ENCODE measurements at regions of chr2 and their contacts with region 1.

Region 1: DNA sequence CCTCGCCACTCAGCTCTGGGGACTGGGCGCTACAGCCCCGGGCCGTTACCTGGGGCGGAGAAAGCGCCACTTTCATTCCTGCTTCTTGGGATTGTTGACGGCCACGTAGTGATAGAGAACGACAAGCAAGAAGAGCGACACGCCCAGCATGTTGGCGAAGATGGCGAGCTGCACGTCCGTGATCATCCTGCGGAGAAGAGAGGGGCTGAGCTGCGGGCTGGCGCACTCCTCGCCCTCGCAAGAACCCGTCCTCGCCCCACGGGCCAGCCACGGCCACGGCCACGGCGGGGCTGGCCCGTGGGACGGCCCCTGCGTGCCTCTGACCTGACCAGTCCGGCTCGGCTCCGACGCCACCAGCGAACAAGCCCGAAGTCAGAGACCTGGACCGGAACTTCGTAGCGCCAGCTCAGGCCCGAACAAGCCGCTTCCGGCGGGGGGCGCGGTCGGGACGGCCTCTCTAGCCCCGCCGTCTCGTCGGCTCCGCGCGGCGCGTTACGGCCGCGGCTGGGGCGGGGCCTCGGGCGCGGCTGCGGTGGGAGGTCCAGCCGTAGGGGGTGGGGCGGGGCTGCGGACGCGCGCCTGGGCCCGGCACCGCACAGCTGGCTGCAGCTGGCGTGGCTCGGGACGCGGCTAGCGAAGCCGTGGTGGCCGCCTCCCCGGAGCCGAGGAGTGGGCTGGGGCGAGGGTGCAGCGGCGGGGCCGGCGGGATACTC is at the start of gene OST4:
- DNase-seq: peak; percentile 96
- H3K4me3 ChIP-seq: peak within 1 kb of the TSS; percentile 99
- H3K27ac ChIP-seq: peak within 1 kb of the TSS; percentile 87
- H3K4me1 ChIP-seq: peaks cover 41% of the 10 kb centered on the region
- H3K27me3 ChIP-seq: no peaks in the 10 kb centered on the region
- CTCF ChIP-seq: 0 out of 2 replicates have a peak, but pooled peaks have one; percentile 11
- total RNA-seq, gene OST4: 235 and 237 TPM in 2 replicates

Region 2: DNA sequence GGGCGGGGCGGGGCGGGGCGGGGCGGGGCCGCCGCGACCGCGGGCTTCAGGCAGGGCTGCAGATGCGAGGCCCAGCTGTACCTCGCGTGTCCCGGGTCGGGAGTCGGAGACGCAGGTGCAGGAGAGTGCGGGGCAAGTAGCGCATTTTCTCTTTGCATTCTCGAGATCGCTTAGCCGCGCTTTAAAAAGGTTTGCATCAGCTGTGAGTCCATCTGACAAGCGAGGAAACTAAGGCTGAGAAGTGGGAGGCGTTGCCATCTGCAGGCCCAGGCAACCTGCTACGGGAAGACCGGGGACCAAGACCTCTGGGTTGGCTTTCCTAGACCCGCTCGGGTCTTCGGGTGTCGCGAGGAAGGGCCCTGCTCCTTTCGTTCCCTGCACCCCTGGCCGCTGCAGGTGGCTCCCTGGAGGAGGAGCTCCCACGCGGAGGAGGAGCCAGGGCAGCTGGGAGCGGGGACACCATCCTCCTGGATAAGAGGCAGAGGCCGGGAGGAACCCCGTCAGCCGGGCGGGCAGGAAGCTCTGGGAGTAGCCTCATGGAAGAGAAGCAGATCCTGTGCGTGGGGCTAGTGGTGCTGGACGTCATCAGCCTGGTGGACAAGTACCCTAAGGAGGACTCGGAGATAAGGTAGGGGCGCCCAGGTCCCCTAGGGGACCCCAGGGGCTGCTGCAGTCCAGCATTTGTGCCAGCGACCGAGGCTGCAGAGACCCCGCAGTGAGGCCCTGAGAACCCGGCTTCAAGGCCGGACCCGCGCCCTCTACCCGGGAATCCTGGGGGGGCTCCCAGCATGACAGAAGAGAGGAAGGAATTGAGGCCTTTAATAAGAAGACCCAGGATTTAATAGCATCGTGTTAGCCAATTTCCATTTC is 15.5 kb after region 1 on chr2 and contains the start of gene KHK:
- CTCF ChIA-PET with region 1: interaction called, 10 read pairs
- POLR2A ChIA-PET with region 1: interaction called, 15 read pairs
- intact Hi-C with region 1: no loop called
- DNase-seq: peak; percentile 73
- H3K4me3 ChIP-seq: peak within 1 kb of the TSS; percentile 59
- H3K27ac ChIP-seq: peak within 1 kb of the TSS; percentile 86
- H3K4me1 ChIP-seq: peaks cover 6% of the 10 kb centered on the region
- H3K27me3 ChIP-seq: no peaks in the 10 kb centered on the region
- CTCF ChIP-seq: no peak
- total RNA-seq, gene KHK: 39.1 and 40.2 TPM in 2 replicates

Region 3: DNA sequence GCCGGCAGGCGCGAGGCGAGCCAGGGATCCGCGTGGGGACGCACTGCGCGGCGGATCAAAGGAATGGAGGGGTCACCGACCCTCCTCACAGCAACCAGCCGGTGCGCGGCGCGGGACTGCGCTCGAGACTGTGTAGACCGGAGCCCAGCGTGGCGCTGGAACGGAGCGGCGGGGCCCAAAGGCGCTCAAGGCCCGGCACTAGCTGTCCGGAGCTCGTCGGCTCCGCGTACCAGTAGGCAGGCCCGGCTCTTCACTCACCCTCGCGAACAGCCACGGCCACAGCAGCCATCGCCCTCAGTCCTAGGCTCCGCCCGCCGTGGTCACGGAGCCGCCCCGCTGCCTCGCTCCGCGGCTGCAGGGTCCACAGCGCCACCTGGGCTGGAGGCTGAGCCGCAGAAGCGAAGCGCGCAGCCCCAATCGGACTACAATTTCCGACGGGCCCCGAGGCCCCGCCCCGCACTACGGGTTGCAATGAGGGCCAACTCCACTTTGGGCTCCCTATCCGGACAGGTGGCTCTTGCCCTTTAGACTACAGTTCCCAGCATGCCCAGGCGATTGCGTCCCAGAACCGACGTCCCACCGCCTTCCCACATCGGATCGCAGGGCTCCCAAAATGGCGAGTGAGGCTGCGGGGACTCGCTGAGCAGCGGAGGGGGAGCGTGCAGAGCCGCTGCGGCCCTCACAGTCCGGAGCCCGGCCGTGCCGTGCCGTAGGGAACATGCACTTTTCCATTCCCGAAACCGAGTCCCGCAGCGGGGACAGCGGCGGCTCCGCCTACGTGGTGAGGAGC is 298.8 kb after region 1 on chr2 and contains the starts of genes EIF2B4 and SNX17:
- CTCF ChIA-PET with region 1: no interaction called
- POLR2A ChIA-PET with region 1: no interaction called
- intact Hi-C with region 1: no loop called
- DNase-seq: peak; percentile 100
- H3K4me3 ChIP-seq: peak within 1 kb of the TSS; percentile 95
- H3K27ac ChIP-seq: peak within 1 kb of the TSS; percentile 94
- H3K4me1 ChIP-seq: peaks cover 17% of the 10 kb centered on the region
- H3K27me3 ChIP-seq: no peaks in the 10 kb centered on the region
- CTCF ChIP-seq: peak; percentile 93
- total RNA-seq, gene EIF2B4: 68.8 and 74.7 TPM in 2 replicates
- total RNA-seq, gene SNX17: 109 and 110 TPM in 2 replicates

Measured in A673 (cell line).